Panc1 (cell line): ENCODE measurements at regions of chr6 and their contacts with region 1.

Region 1: DNA sequence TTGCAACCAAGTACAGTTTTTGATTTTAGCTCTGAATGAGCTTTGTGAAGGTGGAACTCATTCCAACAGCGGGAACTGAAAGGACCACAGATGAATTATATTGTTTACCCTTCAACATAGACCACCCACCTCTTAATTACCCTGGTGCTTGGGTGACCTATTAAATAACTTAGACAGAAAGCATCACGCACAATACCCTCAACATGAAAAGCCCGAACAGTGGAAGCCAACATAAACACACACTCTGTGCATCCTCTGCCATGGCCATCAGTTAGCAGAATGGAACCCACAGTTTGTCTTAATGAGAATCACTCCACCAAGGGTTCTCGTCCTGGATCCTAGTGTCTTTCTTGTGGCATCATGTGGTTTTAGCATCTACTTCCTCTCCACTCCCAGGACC is 60.5 kb downstream of the FOXF2 start:
- DNase-seq: no peak
- ATAC-seq: no peak
- H3K4me3 ChIP-seq: no peak overlapping the region
- H3K27ac ChIP-seq: no peak overlapping the region
- H3K4me1 ChIP-seq: no peaks in the 10 kb centered on the region
- H3K27me3 ChIP-seq: peaks cover 8% of the 10 kb centered on the region
- CTCF ChIP-seq: no peak

Region 2: GRCh38 chr6:1070085-1070521 is 379.8 kb before region 1 on chr6:
- CTCF ChIA-PET with region 1: no interaction called
- POLR2A ChIA-PET with region 1: interaction called, 13 read pairs
- in situ Hi-C with region 1: no loop called
- intact Hi-C with region 1: no loop called
- DNase-seq: no peak
- ATAC-seq: peak; percentile 64
- H3K4me3 ChIP-seq: no peak overlapping the region
- H3K27ac ChIP-seq: no peak overlapping the region
- H3K4me1 ChIP-seq: peaks cover 4% of the 10 kb centered on the region; the same call in 1 of the 2 replicates
- H3K27me3 ChIP-seq: no peaks in the 10 kb centered on the region
- CTCF ChIP-seq: no peak

Region 3: DNA sequence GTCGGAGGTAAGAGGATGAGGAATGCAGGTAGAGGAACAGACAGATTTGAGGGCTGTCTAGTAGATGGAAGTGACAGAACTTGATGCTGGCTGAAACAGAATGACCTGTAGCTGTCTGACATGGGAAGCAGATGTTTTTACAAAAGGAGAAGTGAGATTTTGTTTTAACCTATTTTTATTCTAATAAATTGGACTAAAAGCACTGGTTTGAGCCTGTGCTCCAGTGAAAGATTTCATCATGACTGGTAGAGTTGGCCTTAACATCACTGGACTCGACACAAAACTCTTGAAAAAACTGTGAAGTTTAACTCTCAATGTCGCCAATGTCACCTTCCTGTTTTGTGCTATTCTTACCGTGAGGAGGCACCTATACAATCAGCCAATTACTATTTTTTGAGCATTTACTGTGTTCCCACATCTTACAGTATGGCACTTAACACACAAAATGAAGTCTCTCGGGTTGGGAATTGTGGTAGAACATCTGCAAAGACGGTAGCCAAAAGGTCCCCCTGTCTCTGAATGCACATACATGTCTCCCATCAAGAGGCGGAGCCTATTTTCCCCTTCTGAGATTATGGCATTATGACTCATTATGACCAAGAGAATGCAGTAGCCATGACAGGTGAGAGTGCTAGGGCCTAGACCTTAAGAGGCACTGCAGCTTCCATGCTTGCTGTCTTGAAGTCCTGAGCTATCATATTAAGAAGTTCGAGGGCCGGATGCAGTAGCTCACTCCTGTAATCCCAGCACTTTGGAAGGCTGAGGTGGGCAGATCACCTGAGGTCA is 32.7 kb after region 1 on chr6:
- CTCF ChIA-PET with region 1: no interaction called
- POLR2A ChIA-PET with region 1: no interaction called
- in situ Hi-C with region 1: no loop called
- intact Hi-C with region 1: no loop called
- DNase-seq: no peak
- ATAC-seq: no peak
- H3K4me3 ChIP-seq: no peak overlapping the region
- H3K27ac ChIP-seq: no peak overlapping the region
- H3K4me1 ChIP-seq: no peaks in the 10 kb centered on the region
- H3K27me3 ChIP-seq: no peaks in the 10 kb centered on the region
- CTCF ChIP-seq: no peak

Region 4: GRCh38 chr6:2166717-2167116 is 716.8 kb after region 1 on chr6:
- CTCF ChIA-PET with region 1: no interaction called
- POLR2A ChIA-PET with region 1: no interaction called
- in situ Hi-C with region 1: no loop called
- intact Hi-C with region 1: no loop called
- DNase-seq: peak; percentile 51
- ATAC-seq: peak; percentile 73; the same call in 1 of the 2 replicates
- H3K4me3 ChIP-seq: no peak overlapping the region
- H3K27ac ChIP-seq: no peak overlapping the region
- H3K4me1 ChIP-seq: no peaks in the 10 kb centered on the region
- H3K27me3 ChIP-seq: no peaks in the 10 kb centered on the region
- CTCF ChIP-seq: no peak